Ascending aorta (tissue), 2 donors: ENCODE measurements at regions of chr12 and their contacts with region 1.

Region 1: DNA sequence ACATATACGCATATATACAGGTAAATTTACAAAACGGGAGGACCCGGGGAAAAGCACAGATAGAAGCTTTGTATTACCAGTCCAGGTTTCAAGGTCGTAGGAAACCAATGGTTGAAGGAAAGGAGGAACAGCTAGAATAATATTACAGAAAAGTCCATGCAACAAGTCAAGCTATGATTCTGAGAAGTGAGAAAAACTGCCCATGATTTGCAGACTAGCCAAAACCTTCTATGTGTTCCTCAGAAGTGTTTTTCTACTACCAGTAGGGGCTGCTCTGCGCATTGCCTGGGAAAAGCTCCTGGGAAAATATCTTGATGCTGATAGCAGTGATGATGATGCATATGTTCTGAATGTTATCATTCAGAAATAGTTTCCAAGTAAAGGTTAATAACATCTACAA is 2.2 kb downstream of the PDZRN4 start:
- DNase-seq: no peak
- H3K4me3 ChIP-seq: peak overlapping the region; percentile 65 to 96
- H3K27ac ChIP-seq: peak overlapping the region; percentile 74 to 87
- H3K4me1 ChIP-seq: peaks cover 0 to 3% of the 10 kb centered on the region in 2 donors
- H3K27me3 ChIP-seq: no peaks in the 10 kb centered on the region
- CTCF ChIP-seq: peak in 2 of 3 experiments; percentile 51 to 65

Region 2: GRCh38 chr12:40837891-40838429 is 352.4 kb before region 1 on chr12:
- intact Hi-C with region 1: no loop called
- DNase-seq: no peak
- H3K4me3 ChIP-seq: no peak overlapping the region
- H3K27ac ChIP-seq: no peak overlapping the region
- H3K4me1 ChIP-seq: no peaks in the 10 kb centered on the region
- H3K27me3 ChIP-seq: no peaks in the 10 kb centered on the region
- CTCF ChIP-seq: no peak

Region 3: GRCh38 chr12:41011939-41012338 is 178.4 kb before region 1 on chr12:
- intact Hi-C with region 1: loop called (anchors 5 kb)
- DNase-seq: no peak
- H3K4me3 ChIP-seq: no peak overlapping the region
- H3K27ac ChIP-seq: no peak overlapping the region
- H3K4me1 ChIP-seq: peaks cover 0 to 2% of the 10 kb centered on the region in 2 donors
- H3K27me3 ChIP-seq: no peaks in the 10 kb centered on the region
- CTCF ChIP-seq: peak in 1 of 3 experiments; percentile 39

Region 4: DNA sequence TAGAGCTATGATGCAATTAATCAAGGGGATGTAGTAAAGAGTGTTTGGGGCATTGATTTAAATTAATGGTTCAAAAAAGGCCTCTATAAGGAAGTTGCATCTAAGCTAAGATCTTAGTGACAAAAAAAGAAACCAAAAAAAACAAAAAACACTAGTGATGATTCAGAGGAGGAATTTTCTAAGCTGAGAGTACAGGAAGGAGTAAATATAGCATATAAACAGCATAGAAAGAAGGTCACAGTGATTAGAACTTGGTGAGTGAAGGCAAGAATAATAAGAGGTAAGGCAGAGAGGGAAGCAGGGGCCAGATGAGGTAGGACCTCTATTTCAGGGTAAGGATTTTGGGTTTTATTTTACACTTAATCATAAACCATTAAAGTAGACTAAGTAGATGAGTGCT is 50.2 kb before region 1 on chr12:
- intact Hi-C with region 1: loop called (anchors 5 kb)
- DNase-seq: no peak
- H3K4me3 ChIP-seq: no peak overlapping the region
- H3K27ac ChIP-seq: peak overlapping the region; percentile 64 to 75
- H3K4me1 ChIP-seq: peaks cover 8 to 17% of the 10 kb centered on the region in 2 donors
- H3K27me3 ChIP-seq: no peaks in the 10 kb centered on the region
- CTCF ChIP-seq: no peak

Region 5: DNA sequence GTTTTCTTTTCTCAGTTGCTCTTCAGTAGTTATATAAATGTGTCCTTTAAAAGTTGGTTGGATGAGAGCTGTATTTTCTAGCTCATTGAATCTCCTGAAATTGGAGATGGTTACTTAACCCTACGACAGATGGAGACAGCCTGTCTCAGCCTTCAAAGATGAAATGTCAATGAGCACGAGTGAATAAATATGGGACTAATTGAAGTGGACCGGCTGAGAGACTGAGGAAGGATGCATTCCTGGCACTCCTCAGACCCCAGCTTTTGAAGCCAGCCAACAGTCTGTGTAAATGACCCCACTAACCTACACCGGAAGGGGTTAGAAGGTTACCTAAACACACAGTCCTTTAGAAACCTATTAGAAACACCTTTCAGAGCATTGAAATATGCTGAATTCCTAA is 44.4 kb after region 1 on chr12:
- intact Hi-C with region 1: no loop called
- DNase-seq: no peak
- H3K4me3 ChIP-seq: no peak overlapping the region
- H3K27ac ChIP-seq: no peak overlapping the region
- H3K4me1 ChIP-seq: no peaks in the 10 kb centered on the region
- H3K27me3 ChIP-seq: no peaks in the 10 kb centered on the region
- CTCF ChIP-seq: no peak